Activated CD8-positive, alpha-beta T cell treated with anti-CD3 and anti-CD28 coated beads for 36 hours (primary cell): ENCODE measurements at regions of chr11 and their contacts with region 1.

Region 1: DNA sequence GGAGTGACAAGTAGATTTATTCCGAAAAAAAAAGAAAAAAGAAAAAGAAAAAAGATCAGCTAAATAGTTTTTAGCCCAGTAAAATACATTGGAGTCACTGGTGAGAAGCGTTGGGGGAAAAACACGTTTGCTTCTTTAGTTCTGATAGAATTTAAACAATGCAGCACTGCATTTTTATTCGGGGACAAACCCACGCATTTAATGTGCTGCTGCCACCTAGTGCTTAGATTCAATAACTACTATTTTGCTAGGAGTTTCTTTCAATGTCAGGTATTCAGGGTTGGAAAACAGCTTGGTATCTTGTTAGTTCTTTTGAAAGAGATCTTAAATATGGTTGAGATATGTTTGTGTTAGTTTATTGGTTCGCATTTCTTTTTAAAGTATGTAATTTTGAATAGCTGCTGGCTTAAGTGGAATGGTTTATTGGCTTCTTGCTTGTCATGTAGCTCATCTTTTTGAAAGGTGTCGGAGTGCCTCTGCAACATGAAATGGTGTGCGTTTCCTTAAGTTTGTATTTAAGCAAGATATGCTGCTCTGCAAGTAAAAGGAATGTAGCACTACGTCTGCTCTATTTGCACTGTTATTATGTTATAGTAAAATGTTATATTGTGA is 41.9 kb downstream of the SVIP start:
- DNase-seq: peak; percentile 41
- ATAC-seq: peak; percentile 60
- H3K4me3 Mint-ChIP-seq: no peak overlapping the region
- H3K27ac Mint-ChIP-seq: no peak overlapping the region
- H3K4me1 Mint-ChIP-seq: no peaks in the 10 kb centered on the region
- H3K27me3 Mint-ChIP-seq: peaks cover 4% of the 10 kb centered on the region
- CTCF ChIP-seq: peak; percentile 92

Region 2: GRCh38 chr11:22331771-22332170 is 455.9 kb before region 1 on chr11:
- CTCF ChIA-PET with region 1: interaction called, 8 read pairs
- POLR2A ChIA-PET with region 1: no interaction called
- intact Hi-C with region 1: loop called (anchors 5 kb)
- DNase-seq: no peak
- ATAC-seq: no peak
- H3K4me3 Mint-ChIP-seq: no peak overlapping the region
- H3K27ac Mint-ChIP-seq: no peak overlapping the region
- H3K4me1 Mint-ChIP-seq: no peaks in the 10 kb centered on the region
- H3K27me3 Mint-ChIP-seq: peaks cover 3% of the 10 kb centered on the region
- CTCF ChIP-seq: no peak

Region 3: GRCh38 chr11:22670830-22671229 is 116.8 kb before region 1 on chr11:
- CTCF ChIA-PET with region 1: interaction called, 11 read pairs
- POLR2A ChIA-PET with region 1: no interaction called
- intact Hi-C with region 1: loop called (anchors 10 kb)
- DNase-seq: no peak
- ATAC-seq: no peak
- H3K4me3 Mint-ChIP-seq: no peak overlapping the region
- H3K27ac Mint-ChIP-seq: no peak overlapping the region
- H3K4me1 Mint-ChIP-seq: peaks cover 19% of the 10 kb centered on the region
- H3K27me3 Mint-ChIP-seq: peaks cover 45% of the 10 kb centered on the region
- CTCF ChIP-seq: peak; percentile 27

Region 4: GRCh38 chr11:22703040-22703439 is 84.6 kb before region 1 on chr11:
- CTCF ChIA-PET with region 1: no interaction called
- POLR2A ChIA-PET with region 1: no interaction called
- intact Hi-C with region 1: no loop called
- DNase-seq: peak; percentile 50
- ATAC-seq: peak; percentile 96
- H3K4me3 Mint-ChIP-seq: no peak overlapping the region
- H3K27ac Mint-ChIP-seq: peak overlapping the region; percentile 81
- H3K4me1 Mint-ChIP-seq: peaks cover 18% of the 10 kb centered on the region
- H3K27me3 Mint-ChIP-seq: peaks cover 3% of the 10 kb centered on the region
- CTCF ChIP-seq: no peak

Region 5: GRCh38 chr11:22768281-22768680 is 19.4 kb before region 1 on chr11:
- CTCF ChIA-PET with region 1: interaction called, 10 read pairs
- POLR2A ChIA-PET with region 1: no interaction called
- intact Hi-C with region 1: no loop called
- DNase-seq: no peak
- ATAC-seq: no peak
- H3K4me3 Mint-ChIP-seq: no peak overlapping the region
- H3K27ac Mint-ChIP-seq: no peak overlapping the region
- H3K4me1 Mint-ChIP-seq: no peaks in the 10 kb centered on the region
- H3K27me3 Mint-ChIP-seq: no peaks in the 10 kb centered on the region
- CTCF ChIP-seq: no peak

Region 6: DNA sequence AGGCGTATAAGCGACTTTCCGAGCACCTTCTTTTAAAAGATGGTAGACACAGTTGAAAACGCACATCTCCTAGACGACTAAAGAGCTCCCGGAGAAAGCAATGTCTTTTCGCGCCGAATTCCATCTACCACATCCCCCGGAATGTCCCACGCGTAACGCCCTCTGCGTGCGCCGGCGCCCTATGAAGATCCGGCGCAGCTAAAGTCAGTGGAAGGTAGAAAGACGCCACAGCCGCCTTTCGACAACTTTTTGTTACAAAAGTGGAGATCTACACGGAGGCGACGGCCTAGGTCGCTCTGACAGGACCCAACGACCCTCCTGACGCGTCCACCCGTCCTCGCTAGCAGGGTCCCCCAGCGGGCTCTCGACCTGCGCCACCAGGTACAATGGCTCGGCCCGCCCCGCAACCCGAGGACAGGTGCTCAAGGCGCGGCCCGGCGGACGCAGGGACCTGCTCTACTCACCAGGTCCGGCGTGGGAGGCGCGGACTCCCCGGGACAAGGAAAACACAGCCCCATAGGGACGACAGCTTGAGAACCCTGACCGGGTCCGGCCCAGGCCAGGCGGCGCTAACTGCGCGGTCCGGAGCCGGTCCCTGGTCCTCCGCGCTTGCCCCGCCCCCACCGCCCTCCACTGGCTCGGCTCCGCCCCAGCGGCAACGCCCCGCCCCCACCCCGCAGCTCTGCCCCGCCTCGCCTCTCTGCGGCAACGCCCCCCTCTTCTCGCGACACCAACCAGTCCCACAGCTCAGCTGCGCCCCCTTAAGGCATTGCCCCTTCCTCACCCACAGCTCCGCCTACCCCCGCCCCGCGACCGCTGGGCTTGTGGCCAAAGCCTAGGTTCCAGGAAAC is 41.8 kb after region 1 on chr11 and contains the start of gene SVIP:
- CTCF ChIA-PET with region 1: interaction called, 14 read pairs
- POLR2A ChIA-PET with region 1: no interaction called
- intact Hi-C with region 1: no loop called
- DNase-seq: peak; percentile 95
- ATAC-seq: peak; percentile 95
- H3K4me3 Mint-ChIP-seq: peak within 1 kb of the TSS; percentile 87
- H3K27ac Mint-ChIP-seq: peak within 1 kb of the TSS; percentile 92
- H3K4me1 Mint-ChIP-seq: peaks cover 15% of the 10 kb centered on the region
- H3K27me3 Mint-ChIP-seq: no peaks in the 10 kb centered on the region
- CTCF ChIP-seq: peak; percentile 29
- total RNA-seq, gene SVIP: 62.9 to 65.9 TPM

Region 7: GRCh38 chr11:22898036-22898435 is 110.4 kb after region 1 on chr11:
- CTCF ChIA-PET with region 1: no interaction called
- POLR2A ChIA-PET with region 1: no interaction called
- intact Hi-C with region 1: no loop called
- DNase-seq: no peak
- ATAC-seq: no peak
- H3K4me3 Mint-ChIP-seq: no peak overlapping the region
- H3K27ac Mint-ChIP-seq: no peak overlapping the region
- H3K4me1 Mint-ChIP-seq: no peaks in the 10 kb centered on the region
- H3K27me3 Mint-ChIP-seq: no peaks in the 10 kb centered on the region
- CTCF ChIP-seq: no peak